GM10248 (cell line): ENCODE measurements at regions of chr10 and their contacts with region 1.

Region 1: DNA sequence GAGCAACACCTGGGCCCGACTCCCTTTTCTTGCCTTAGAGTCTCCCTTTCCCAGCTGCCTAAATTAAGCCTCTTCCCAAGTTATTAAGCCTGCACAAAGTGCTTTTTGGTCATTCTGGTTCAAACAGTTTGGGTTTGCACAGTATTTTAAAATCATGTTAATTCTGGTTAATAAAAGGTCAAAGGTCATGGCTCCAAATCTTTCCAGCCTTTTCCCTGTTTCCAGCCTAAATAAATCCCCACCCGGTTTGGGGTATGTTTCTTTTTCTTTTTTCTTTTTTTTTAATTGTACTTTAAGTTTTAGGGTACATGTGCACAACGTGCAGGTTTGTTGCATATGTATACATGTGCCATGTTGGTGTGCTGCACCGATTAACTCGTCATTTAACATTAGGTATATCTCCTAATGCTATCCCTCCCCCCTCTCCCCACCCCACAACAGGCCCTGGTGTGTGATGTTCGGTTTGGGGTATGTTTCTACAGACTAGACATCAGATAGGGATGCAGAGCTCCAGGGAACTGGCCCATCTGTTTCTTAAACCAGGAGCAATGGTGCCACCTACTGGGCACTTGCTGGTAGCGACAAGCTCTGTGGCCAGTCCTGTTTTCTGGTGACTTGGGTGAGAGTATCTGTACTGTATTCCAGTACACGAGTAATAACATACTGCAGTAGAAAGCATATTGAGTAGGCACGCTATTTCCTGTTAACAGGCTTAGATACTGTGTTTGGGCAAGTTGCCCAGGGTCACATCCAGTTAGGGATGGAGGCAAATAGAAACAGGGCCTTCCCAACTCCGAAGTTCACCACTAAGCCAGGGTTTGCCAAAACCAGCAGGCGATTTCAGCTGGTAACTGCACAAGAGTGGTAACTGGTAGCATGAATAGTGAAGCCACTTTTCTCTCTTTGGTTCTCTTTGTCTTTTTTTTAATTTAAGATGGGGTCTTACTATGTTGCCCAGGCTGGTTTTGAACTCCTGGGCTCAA is 60.6 kb upstream of the TRIM8 start:
- DNase-seq: peak; percentile 89
- CTCF ChIP-seq: peak; percentile 85

Region 2: GRCh38 chr10:102476466-102477141 is 107.1 kb before region 1 on chr10:
- CTCF ChIA-PET with region 1: interaction called, 23 read pairs
- POLR2A ChIA-PET with region 1: no interaction called
- DNase-seq: no peak
- CTCF ChIP-seq: no peak

Region 3: DNA sequence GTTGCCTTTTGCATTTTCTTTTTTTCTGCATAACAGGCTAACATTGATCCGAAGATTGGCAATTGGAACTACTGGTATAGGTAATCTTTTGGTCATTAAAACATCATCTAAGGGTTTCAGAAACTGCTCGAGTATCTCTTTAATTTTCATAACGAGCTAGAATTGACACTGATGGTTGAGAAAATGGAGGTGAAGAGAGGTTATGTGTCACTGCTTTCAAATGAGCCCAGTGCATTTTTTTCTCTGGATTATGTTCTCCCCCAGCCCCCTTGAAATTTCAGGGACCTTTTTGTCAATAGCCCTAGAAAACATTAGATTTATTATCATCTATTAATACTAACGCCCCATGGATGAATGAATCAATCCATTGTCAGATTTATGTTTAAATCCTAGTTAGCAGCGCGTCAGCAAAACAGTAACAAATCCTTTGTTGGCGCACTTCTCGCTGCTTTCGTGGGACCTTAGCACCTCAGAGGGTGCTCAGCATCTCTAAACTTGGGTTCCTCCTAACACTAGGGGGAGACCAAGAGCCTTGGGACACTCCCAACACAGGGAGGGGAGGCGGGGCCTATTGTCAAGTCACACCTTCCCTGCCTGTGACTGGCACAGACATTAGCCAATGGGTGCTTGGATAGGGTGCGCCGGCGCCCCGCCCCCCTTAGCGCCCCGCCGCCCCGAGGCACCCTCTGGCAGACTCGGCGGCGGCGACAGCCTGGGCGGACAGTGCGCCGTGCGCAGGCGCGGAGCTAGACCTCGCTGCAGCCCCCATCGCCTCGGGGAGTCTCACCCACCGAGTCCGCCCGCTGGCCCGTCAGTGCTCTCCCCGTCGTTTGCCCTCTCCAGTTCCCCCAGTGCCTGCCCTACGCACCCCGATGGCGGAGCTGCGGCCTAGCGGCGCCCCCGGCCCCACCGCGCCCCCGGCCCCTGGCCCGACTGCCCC is 80.2 kb before region 1 on chr10 and contains the start of gene SUFU:
- CTCF ChIA-PET with region 1: interaction called, 174 read pairs
- POLR2A ChIA-PET with region 1: interaction called, 4 read pairs
- DNase-seq: peak; percentile 98
- CTCF ChIP-seq: peak; percentile 81

Region 4: DNA sequence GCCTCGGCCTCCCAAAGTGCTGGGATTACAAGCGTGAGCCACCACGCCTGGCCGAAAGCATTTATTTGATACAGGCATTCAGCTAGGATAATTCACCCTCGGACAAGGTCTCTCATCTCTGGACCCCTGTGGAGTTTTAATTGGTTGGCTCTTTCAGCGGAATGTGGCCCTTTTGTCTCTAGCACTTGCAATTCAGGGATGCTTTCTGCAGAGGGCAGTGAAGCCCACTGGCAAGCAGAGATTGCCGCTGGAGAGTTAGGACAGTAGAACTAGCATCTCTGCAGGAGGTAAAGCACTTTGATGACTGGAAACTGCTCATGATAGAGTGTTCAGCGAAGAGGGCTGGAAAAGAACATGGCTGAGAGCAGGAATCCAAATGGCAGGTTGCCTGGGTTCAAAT is 17.9 kb before region 1 on chr10:
- CTCF ChIA-PET with region 1: interaction called, 35 read pairs
- POLR2A ChIA-PET with region 1: no interaction called
- DNase-seq: no peak
- CTCF ChIP-seq: peak; percentile 7

Region 5: DNA sequence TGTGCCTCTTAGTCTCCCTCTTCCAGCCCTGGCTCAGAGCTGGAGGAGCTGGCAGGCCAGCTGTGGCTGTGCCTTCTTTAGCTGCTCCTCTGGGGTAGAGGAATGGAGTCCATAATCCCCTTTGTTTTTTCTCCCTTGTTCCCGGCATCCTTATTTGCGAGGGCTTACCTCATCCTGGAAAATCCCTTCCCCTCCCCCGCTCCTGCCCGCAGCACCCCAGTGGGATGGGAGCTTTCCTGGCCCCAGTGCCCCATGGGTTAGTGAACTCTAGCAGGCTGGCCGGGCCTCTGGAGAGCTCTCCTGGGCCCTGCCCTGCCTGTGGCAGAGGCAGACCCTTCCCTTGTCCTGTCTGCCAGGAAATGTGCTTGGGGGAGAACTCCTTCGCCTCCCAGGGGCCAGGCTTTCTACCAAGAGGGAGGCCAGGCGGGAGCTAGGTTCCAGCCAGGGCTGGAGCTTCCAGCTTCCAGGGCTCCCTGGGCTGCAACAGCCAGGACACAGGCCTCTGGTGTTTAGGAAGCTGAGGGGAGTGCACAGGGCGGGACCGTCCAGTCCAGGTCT is 44.1 kb after region 1 on chr10:
- CTCF ChIA-PET with region 1: interaction called, 10 read pairs
- POLR2A ChIA-PET with region 1: no interaction called
- DNase-seq: no peak
- CTCF ChIP-seq: no peak

Region 6: GRCh38 chr10:102652170-102652916 is 68.6 kb after region 1 on chr10:
- CTCF ChIA-PET with region 1: no interaction called
- POLR2A ChIA-PET with region 1: no interaction called
- DNase-seq: peak; percentile 73
- CTCF ChIP-seq: no peak